ENCODE measurements at regions of chr1 and their contacts with region 1.

Region 1: GRCh38 chr1:154961497-154962262 is at the start of gene PYGO2:
- DNase-seq: peak; percentile 94
- total RNA-seq, gene PYGO2: 16.9 TPM

Region 2: GRCh38 chr1:154703170-154703569 is 258.5 kb before region 1 on chr1:
- intact Hi-C with region 1: no loop called
- DNase-seq: no peak

Region 3: DNA sequence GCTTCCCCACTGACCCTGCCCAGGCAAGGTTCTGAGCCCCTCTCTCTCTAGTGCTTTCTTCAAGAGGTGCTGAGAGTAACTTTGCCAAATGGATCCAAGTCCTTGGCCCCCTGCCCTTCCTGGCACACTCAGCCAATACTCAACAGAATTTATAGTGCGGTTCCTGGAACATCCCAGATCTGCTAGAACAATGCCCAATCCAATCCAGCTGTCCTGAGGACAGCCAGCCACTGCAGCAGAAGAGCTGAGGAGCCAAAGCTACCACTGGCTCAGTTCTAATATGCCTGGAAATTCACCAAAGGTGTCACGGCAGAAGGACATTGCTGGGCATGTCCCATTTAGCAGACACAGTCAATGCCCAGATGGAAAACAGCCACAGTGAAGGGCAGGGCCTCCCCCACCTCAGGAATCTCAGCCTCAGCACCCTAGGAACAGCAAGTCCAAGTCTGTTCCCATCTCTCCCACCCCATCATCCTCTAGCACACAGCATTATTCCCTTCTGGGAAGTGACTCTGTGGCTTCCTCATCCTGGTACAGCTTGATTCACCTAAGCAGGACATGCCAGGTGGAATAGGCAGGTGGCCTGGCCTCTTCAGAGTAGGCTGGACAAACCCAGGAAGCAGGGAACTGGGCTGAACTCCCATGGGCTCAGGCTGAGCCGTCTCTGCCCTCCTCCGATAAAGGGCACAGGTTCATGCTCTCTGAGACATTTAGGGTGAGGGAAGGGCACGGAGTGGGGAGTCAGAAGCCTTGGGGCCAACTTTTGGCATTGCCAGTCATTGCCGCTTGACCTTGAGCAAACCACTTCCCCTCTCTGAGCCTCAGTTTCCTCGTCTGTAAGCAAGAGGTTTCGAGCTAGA is 49.8 kb before region 1 on chr1:
- intact Hi-C with region 1: no loop called
- DNase-seq: peak; percentile 54

Region 4: GRCh38 chr1:154936555-154937084 is 25.1 kb before region 1 on chr1 and contains the start of gene PMVK:
- intact Hi-C with region 1: loop called (anchors 1 kb)
- DNase-seq: peak; percentile 99
- total RNA-seq, gene PMVK: 30.9 TPM

Region 5: DNA sequence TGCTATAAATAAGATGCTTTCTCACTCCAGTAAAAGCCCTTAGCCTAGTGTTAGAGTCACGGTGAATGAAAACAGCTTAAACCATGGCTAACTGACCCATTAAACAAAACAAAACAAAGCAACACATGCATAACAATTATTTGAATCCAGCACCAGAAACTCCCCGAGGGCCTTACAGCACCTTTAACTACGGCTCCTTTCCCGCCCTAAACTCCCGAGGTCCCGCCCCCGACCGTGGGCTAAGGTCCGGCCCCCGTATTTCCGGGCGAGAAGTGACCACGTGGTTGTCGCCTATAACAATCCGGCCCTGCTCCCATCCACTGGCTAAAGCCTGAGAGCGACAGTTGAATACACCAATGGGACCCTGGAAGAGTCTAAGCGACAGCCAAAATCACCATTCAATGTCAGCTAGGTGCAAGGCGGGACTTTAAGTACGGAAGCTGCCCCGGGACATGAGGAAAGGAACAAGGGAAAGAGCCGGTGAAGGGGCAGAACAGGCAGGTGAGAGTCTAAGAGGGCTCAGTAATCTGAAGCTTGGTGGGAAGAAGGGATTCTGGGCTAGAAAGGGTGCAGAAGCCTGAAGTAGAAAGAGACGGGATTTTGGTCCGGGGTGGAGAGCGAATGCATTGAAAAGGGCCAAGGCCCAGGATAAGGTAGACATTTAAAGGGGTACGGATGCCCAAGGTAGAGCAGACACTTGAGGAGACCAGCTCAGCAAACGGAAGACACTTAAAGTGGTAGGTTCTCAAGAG is 21.4 kb after region 1 on chr1 and contains the start of gene FLAD1:
- intact Hi-C with region 1: loop called (anchors 1 kb)
- DNase-seq: peak; percentile 97
- total RNA-seq, gene FLAD1: 22.2 TPM

Region 6: DNA sequence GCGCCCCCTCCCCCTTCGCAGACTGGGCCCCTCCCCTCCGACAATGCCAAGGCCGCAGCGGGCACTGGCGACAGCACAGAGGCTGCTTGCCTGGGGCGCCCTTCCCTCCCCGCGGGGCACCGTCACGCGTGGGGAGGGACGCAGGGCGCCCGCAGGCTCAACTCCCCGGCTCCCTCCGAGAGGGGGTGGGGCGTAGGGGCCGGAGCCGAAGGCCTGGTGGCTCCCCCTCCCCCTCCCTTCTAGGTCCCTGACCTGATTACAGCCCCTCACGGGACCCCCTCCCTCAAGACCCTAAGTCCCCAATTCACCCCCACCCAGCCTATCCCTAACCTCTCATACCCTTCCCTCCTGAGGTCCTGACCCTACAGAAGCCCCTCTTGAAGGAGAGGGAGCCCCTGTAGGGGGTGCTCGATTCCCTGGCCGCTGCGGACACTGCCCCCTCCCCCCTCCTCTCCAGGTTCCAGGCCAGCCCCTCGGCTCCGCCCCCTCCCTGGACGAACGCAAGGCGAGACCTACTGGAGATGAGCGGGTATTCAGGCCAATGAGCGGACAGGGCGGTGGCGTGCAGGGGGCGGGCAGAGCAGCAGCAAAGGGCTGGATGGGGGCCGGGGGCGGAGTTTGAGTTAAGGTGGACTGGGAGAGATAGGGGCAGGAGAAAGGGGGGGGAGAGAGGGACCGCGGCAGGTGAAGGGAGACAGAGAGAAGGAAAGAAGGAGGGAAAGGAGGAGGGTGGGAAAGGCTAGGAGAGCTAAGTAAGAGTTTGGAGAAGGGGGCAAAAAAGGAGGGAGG is 40.2 kb after region 1 on chr1:
- intact Hi-C with region 1: loop called (anchors 2 kb)
- DNase-seq: peak; percentile 100